ENCODE measurements at regions of chr14 and their contacts with region 1.

Region 1: GRCh38 chr14:90331497-90332435 is at the start of gene NRDE2:
- DNase-seq: peak; percentile 98
- H3K4me3 Mint-ChIP-seq: peak within 1 kb of the TSS; percentile 90
- H3K27ac Mint-ChIP-seq: peak within 1 kb of the TSS; percentile 92
- H3K4me1 Mint-ChIP-seq: peaks cover 23% of the 10 kb centered on the region
- H3K27me3 Mint-ChIP-seq: no peaks in the 10 kb centered on the region
- total RNA-seq, gene NRDE2: 22.0 to 23.1 TPM

Region 2: DNA sequence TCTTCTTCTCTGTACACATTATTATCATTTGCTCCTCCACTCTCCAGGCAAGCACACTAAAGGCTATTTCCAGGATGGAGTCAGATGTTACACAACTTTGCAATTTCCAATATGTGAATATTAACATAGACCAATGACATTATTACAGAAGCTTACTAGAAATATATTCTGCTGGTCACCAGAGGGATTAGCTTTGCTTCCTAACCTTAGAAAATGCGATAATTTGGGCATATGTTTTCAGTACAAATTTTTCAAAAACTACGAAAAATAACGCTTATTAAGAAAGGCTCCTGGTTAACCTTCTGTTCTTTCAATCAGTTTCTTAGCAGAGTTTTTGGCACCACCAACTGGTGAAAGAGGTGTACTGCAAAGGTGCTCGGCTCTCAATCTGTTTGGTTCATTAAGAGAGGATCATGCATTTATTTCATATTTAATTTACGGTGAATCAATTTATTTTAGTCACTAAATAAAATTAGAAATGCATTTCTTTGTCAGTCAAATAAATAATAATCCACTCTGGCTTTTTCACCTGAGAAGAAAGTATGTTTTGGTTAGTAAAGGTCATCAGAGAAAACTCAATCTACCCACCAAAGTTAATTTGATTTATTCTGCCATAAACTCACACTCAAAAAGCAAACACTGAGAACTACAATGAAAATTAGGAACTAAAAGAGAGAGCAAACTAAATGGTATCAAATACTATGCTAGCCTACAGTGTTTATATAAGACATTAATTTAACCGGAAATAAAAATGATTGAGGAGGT is 416.5 kb before region 1 on chr14:
- CTCF ChIA-PET with region 1: no interaction called
- intact Hi-C with region 1: no loop called
- DNase-seq: peak; percentile 79
- H3K4me3 Mint-ChIP-seq: no peak overlapping the region
- H3K27ac Mint-ChIP-seq: no peak overlapping the region
- H3K4me1 Mint-ChIP-seq: no peaks in the 10 kb centered on the region
- H3K27me3 Mint-ChIP-seq: peaks cover 3% of the 10 kb centered on the region

Region 3: DNA sequence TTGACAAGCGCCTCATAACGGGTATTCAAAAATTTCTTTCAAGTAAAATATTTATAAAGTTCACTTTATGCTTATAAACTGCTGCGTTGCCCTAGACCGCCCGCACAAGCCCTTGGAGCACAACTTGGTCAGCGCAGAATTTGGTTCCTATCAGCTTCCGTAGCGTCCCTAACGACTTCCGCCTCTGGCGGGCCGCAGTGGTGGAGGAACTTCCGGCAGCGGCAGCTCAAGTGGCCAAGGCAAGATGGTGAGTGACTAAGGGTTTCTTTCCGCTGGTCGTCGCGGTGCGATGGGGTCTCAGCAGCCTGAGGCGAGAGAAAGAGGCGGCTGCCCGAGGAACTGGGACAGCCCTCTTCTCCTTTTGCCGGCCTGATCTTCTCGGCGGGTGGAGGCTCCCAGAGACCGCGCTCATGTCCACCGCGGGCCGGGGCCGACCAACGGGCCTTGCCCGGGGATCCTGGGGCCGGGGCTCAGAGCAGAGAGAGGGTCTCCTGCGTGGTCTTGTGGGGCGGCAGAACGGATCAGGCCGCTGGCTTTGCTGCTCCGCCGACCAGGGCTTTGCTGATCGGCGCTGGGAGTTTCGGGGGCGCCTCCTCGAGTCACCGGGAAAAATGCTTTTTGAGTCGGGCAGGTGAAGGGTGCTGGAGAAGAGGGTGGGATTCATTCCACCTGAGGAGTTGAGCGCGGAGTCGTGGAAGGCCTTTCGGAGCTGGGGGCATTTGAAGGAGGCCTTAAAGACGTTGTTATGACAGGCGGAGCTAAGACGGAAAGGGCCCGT is 75.2 kb before region 1 on chr14 and contains the start of gene PSMC1:
- CTCF ChIA-PET with region 1: no interaction called
- intact Hi-C with region 1: loop called (anchors 2 kb)
- DNase-seq: peak; percentile 96
- H3K4me3 Mint-ChIP-seq: peak within 1 kb of the TSS; percentile 98
- H3K27ac Mint-ChIP-seq: peak within 1 kb of the TSS; percentile 93
- H3K4me1 Mint-ChIP-seq: peaks cover 32% of the 10 kb centered on the region
- H3K27me3 Mint-ChIP-seq: peaks cover 3% of the 10 kb centered on the region
- total RNA-seq, gene PSMC1: 102 to 105 TPM

Region 4: DNA sequence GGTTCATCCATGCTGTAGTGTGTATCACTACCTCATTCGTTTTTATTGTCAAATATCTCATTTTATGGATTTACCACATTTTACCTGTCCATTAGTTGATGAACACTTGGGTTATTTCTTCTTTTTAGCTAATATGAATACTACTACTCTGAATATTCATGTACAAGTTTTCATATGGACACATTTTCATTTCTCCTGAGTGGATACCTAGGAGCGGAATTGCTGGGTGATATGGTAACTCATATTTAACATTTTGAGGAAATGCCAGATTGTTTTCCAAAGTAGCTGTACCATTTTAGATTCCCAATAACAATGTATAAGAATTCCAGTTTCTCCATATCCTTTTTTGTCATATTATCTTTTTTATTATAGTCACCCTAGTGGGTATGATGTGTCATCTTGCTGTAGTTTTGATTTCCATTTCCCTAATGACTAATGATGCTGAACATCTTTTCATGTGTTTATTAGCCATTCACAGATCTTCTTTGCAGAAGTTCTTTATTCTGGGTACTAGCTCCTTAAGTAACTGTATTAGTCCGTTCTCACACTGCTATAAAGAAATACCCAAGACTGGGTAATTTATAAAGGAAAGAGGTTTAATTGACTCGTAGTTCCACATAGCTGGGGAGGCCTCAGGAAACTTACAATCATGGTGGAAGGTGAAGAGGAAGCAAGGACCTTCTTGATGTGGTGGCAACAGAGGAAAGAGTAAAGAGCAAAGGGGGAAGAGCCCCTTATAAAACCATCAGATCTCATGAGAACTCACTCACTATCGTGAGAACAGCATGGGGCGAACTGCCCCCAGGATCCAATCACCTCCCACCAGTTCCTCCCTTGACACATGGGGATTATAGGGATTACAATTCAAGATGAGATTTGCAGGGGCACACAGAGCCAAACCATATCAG is 11.9 kb before region 1 on chr14:
- CTCF ChIA-PET with region 1: no interaction called
- intact Hi-C with region 1: loop called (anchors 1 kb)
- DNase-seq: no peak
- H3K4me3 Mint-ChIP-seq: no peak overlapping the region
- H3K27ac Mint-ChIP-seq: peak overlapping the region; percentile 87
- H3K4me1 Mint-ChIP-seq: peaks cover 34% of the 10 kb centered on the region
- H3K27me3 Mint-ChIP-seq: no peaks in the 10 kb centered on the region

Region 5: DNA sequence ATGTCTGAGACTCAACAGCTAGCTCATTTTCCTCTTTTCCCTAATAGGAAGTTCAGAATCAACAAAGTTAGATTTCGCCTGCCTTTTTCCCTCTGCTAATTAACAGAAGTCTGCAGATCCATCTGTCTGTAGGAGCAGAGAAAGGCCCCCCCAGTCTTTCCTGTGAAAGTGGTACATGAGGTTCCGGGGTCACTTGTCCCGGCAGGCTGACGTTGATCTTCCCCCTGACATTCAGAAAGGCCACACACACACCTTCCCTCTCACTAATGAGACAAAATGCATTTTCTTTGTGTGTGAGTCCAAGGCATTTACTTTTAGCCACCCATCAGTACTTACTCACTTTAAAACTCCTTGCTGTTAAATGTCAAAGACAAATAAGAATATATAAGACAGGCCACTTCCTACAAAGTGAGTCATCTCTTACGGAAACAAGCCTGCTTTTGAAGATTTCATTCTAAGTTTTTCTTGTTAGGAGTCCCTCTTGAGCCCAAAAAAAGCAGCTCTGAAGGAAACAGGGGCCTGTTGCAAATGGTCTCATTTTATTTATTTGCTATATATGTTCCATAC is 345.8 kb after region 1 on chr14:
- CTCF ChIA-PET with region 1: interaction called, 4 read pairs
- intact Hi-C with region 1: loop called (anchors 1 kb)
- DNase-seq: peak; percentile 37
- H3K4me3 Mint-ChIP-seq: peak overlapping the region; percentile 16
- H3K27ac Mint-ChIP-seq: peak overlapping the region; percentile 82
- H3K4me1 Mint-ChIP-seq: peaks cover 38% of the 10 kb centered on the region
- H3K27me3 Mint-ChIP-seq: no peaks in the 10 kb centered on the region

Region 6: DNA sequence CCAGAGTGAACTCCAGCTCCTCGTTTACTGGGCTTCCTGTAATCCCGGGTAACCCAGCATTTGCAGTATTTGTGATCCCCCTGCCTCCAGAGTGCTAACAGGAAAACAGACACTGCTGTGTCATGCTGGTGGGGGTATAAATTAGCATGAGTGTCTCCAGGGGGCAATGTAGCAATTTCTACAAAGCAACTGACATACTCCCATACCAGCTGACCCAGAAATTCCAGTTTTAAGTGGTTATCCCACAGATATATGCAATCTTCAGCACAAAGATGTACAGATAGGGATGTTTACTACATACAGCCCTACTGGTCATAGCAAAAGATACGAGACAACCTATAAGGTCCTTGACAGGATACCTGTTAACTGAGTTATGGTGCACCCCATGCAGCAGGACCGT is 465.7 kb after region 1 on chr14:
- CTCF ChIA-PET with region 1: no interaction called
- intact Hi-C with region 1: no loop called
- DNase-seq: no peak
- H3K4me3 Mint-ChIP-seq: no peak overlapping the region
- H3K27ac Mint-ChIP-seq: no peak overlapping the region
- H3K4me1 Mint-ChIP-seq: peaks cover 5% of the 10 kb centered on the region
- H3K27me3 Mint-ChIP-seq: no peaks in the 10 kb centered on the region